Aorta (tissue), 5 donors: ENCODE measurements at regions of chr17 and their contacts with region 1.

Region 1: DNA sequence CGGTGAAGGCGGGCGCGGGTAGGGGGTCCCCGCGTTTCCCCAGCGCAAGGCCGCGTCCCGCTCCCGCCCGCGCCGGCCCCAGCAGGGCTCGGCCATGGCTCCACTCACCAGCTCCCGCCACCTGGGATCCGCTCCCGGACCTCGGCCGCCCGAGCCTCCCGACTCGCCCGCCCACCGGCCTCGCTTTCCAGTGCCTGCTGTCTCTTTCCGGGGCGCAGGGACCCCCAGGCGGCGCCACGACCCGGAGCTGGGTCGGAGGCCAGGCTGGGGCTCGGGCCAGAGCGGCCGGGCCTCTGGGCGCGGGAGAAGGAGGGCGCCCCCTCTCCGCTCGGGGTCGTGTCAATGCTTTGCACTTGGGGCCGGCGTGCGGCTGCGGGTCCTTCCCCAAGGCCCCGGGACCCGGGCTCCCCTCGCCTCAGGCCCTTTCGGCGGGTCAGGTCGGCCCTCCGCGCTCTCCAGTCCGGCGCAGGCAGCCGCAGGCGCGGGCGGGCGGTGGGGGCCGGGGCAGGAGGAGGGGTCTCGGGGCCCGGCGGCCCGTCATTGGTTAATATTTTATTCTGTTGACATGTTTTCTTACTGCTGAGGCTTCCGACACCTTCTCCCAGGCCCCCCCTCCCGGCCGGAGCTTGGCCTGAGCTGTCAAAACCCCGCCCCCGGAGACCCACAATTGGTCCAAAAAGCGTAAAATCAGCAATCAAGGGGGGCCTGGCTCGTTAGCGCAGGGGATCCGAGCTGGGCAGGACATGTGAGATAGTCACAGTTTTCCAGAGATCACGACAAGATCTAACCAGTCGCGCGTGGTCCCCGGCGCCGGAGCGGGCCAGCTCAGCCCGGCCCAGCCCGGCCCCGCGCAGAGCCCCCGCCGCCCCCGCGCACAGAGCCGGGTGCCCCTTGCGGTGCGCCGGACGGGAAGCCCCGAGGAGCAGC is at the start of gene TBX2:
- DNase-seq: peak; percentile 92 to 93
- ATAC-seq: peak; percentile 47
- H3K4me3 ChIP-seq: peak within 1 kb of the TSS; percentile 86 to 87
- H3K27ac ChIP-seq: peak within 1 kb of the TSS; percentile 60 to 68
- H3K4me1 ChIP-seq: no peaks in the 10 kb centered on the region
- H3K27me3 ChIP-seq: no peaks in the 10 kb centered on the region
- total RNA-seq, gene TBX2: 28.9 to 42.6 TPM

Region 2: GRCh38 chr17:60908335-60908734 is 491.1 kb before region 1 on chr17:
- intact Hi-C with region 1: loop called in 1 of 2 experiments (anchors 5 kb)
- DNase-seq: no peak
- ATAC-seq: no peak
- H3K4me3 ChIP-seq: no peak overlapping the region
- H3K27ac ChIP-seq: no peak overlapping the region
- H3K4me1 ChIP-seq: no peaks in the 10 kb centered on the region
- H3K27me3 ChIP-seq: no peaks in the 10 kb centered on the region

Region 3: GRCh38 chr17:61129267-61130254 is 269.8 kb before region 1 on chr17:
- intact Hi-C with region 1: loop called in 1 of 2 experiments (anchors 5 kb)
- DNase-seq: no peak
- ATAC-seq: no peak
- H3K4me3 ChIP-seq: no peak overlapping the region
- H3K27ac ChIP-seq: peak overlapping the region in 1 of 2 donors; percentile 17
- H3K4me1 ChIP-seq: peaks cover 2 to 6% of the 10 kb centered on the region in 2 donors
- H3K27me3 ChIP-seq: no peaks in the 10 kb centered on the region

Region 4: DNA sequence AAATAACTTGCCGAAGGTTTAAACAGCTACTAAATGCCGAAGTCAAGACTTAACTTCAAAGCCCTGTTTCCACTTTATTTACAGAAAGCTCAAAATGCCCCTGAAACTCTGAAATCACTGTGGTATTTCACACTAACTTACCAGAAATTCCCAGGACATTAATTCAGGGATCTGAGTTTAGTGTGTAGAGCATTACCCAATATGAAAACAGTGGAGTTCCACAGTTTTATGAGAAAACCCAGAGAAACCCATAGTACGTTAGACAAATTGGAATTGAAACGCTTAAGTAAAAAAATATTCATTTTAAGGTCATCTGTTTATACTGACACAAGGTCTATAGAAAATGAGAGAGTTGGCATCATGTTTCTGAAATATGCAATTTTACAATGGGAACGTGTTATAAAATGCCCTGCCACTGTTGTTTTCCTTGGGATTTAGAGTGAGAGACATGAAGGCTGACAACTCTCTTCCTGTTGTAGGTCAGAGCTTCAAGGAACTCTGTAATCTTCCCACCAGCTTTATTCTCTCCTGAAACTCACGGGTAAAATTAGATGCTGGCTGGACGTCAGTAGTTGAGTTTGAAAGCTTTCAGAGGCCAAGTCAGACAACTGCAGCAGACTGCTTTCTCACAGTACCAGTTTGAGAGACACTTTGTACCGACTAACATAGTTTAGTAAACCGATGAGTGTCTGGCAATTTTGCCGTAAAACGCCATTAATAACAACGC is 139.2 kb before region 1 on chr17:
- intact Hi-C with region 1: loop called in 1 of 2 experiments (anchors 5 kb)
- DNase-seq: no peak
- ATAC-seq: peak; percentile 77
- H3K4me3 ChIP-seq: peak overlapping the region in 1 of 2 donors; percentile 31
- H3K27ac ChIP-seq: peak overlapping the region in 1 of 2 donors; percentile 82
- H3K4me1 ChIP-seq: peaks cover 7 to 13% of the 10 kb centered on the region in 2 donors
- H3K27me3 ChIP-seq: no peaks in the 10 kb centered on the region

Region 5: DNA sequence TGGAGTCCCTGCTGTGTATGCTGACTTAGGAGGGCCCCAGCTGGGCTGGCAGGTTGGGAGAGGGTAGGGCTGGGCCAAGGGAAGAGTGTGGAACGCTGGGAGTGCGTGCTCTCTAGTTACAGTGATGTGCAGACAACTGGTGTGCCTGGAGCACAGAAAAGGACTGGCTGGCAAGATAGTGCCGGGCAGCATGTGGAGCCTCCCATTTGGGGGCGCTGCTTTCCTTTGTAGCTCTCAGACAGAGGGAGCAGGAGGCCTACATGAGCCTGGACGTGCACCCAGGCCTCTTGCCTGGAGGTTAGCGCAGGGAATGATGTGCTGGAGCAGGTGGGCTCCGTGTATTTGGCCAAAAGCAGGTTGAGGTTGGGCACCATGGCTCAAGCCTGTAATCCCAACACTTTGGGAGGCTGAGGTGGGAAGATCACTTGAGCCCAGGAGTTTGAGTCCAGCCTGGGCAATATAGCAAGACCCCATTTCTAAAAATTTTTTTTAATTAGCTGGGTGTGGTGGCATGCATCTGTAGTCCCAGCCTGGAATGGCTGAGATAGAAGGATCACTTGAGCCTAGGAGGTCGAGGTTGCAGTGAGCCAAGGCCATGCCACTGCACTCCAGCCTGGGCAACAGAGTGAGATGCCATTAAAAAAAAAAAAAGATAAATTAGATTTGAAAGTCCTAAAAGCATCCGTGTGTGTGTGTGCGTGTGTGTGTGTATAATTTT is 26.8 kb after region 1 on chr17:
- intact Hi-C with region 1: no loop called
- DNase-seq: no peak
- ATAC-seq: no peak
- H3K4me3 ChIP-seq: no peak overlapping the region
- H3K27ac ChIP-seq: no peak overlapping the region
- H3K4me1 ChIP-seq: no peaks in the 10 kb centered on the region
- H3K27me3 ChIP-seq: no peaks in the 10 kb centered on the region